ENCODE measurements at regions of chr11 and their contacts with region 1.

Region 1: DNA sequence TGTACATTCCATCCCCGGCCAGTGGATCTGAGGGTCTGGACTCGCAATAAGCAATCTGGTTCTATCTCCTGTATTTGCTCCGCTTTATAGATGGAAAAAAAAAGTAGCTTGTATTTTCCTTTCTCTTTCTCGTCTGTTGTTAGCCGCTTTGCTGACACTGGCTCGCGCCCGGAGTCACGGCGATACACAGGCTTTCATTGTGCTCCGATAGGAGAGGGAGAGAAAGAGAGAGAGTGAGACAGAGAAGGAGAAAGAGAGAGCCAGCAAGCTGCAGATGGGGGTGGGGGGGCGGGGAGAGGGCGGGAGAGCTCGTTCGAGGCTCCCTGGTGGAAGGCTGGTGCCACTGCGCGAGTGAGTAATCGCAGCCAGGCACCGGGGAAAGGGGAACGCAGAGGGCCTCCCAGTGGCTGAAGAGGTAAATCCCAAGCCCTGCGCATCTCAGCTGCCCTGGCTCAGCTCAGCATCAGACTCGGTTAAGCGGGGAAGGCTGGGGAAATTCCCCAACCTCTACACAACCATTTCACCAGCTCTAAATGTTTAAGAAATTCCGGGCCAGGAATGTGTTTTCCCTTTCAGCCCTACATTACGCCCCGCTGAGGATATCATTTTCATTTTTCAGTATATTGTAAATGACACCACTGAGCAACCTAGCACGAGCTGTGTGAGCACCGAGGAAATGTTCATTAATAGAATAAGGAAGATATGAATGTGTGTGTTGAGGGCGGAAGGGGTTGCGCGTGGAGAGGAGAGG is at the start of gene MAML2:
- DNase-seq: peak; percentile 76
- H3K4me3 ChIP-seq: peak within 1 kb of the TSS; percentile 81
- CTCF ChIP-seq: peak; percentile 94

Region 2: DNA sequence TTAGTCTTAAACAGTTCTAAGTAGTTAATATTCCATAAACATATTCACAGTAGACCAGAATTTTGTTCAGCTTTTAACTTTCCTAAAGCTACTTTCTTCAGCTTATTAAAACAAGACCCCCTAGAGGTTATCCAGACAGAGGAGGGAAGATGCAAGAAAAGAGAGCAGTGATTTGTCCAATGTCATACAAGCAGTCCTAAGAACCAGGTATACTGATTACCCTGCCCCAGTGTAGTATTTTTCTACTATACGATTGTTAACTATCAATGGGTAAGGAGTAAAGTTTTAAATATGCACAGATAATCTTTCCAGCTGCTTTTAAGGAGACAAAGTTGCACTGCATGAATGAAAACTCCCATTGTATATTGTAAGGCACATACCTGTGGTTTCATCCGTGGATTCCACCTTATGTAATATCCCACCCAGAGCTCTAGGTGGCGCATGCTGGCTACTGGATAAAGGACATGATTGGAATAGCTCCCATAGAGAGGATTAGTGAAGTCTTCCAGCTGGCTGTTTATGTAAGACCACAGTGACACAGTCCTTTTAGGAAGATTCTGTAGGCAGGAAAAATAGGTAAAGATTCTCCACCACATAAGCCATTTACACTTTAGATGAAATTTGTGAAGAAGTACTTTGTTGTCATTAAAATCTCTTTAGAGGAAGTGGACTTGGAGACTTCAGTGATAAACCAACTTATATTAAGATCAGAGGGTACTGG is 507.2 kb before region 1 on chr11:
- CTCF ChIA-PET with region 1: interaction called, 47 read pairs
- POLR2A ChIA-PET with region 1: interaction called, 3 read pairs
- DNase-seq: peak; percentile 82
- H3K4me3 ChIP-seq: no peak overlapping the region
- CTCF ChIP-seq: peak; percentile 79

Region 3: DNA sequence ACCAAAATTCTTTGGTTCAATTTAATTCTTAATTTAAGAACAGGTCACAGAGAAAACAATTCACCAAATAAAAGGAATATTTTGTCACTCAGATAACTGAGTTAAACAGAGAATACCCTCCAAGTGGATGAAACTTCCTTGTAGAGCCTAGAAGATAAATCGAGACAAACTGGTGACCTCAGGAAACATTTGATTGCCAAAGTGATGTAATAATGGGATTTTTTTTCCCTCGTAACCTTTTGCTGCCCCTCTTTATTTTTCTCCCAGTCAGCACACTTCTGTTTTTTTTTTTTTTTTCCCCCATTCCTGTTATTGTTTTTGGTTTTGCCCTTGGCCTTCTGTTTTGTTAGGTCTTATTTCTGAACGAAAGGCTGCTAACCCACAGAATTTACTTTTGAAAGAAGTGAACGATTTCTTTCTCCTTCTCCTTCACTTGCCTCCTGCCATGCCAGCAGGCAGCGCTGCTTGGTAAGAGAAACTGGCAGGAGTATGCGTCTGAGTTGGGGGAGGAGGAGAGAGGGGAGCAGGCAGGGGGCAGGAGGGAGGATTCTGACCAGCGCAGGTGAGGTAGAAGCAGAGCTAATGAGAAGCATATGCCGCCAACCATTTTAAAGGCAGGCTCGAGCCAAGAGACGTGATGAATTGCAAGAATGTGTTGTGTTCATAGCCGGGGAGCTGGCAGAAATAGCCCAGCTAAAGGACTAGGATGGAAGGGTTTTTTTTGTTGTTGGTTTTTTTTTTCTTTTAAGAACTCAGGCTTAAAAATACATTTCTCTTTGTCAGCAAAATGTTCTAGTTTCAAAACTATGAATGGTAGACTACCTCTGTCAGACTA is 297.3 kb before region 1 on chr11:
- CTCF ChIA-PET with region 1: interaction called, 12 read pairs
- POLR2A ChIA-PET with region 1: no interaction called
- DNase-seq: peak; percentile 65
- H3K4me3 ChIP-seq: peak overlapping the region; percentile 16; the same call in 1 of the 2 replicates
- CTCF ChIP-seq: peak; percentile 50

Region 4: GRCh38 chr11:96143016-96143670 is 200.0 kb before region 1 on chr11:
- CTCF ChIA-PET with region 1: interaction called, 12 read pairs
- POLR2A ChIA-PET with region 1: no interaction called
- DNase-seq: no peak
- H3K4me3 ChIP-seq: no peak overlapping the region
- CTCF ChIP-seq: no peak

Region 5: DNA sequence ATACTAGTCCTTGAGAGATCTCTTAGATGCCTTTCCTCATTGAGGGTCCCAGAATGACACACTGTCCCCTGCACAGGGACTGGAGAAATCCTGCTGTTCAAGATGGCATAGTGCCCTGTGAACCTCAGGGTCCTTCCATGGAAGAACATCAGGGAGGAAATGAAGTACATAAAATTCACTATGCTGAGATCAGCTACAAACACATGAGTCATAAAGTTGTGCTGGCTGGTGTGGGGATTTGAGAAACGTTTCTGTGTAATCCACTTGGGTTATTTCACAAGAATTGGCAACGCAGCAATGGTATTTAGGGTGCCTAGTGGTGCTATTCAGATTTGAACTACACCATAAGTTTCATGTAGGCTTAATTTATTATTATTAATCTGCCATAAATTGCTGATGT is 174.5 kb before region 1 on chr11:
- CTCF ChIA-PET with region 1: interaction called, 17 read pairs
- POLR2A ChIA-PET with region 1: interaction called, 10 read pairs
- DNase-seq: no peak
- H3K4me3 ChIP-seq: no peak overlapping the region
- CTCF ChIP-seq: no peak

Region 6: GRCh38 chr11:96235751-96236150 is 107.4 kb before region 1 on chr11:
- CTCF ChIA-PET with region 1: interaction called, 24 read pairs
- POLR2A ChIA-PET with region 1: no interaction called
- DNase-seq: no peak
- H3K4me3 ChIP-seq: no peak overlapping the region
- CTCF ChIP-seq: no peak

Region 7: DNA sequence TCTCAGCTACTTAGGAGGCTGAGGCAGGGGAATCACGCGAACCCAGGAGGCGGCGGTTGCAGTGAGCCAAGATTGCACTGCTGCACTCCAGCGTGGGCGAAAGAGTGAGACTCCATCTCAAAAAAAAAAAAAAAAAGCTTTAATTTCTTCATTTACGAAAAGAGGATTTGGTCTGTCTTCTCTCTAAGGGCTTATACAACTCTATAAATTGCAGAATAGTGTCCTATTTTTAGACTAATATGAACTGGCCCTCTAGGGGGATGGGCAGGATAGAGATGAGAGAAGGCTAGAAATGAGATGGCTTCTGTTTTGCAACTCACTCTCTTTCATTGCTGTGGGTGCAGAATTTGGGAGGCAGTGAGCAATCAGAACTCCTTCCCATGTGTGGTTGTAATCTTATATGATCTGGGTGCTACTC is 11.4 kb before region 1 on chr11:
- CTCF ChIA-PET with region 1: interaction called, 13 read pairs
- POLR2A ChIA-PET with region 1: no interaction called
- DNase-seq: no peak
- H3K4me3 ChIP-seq: no peak overlapping the region
- CTCF ChIP-seq: no peak

Region 8: GRCh38 chr11:96486894-96487595 is 143.9 kb after region 1 on chr11:
- CTCF ChIA-PET with region 1: no interaction called
- POLR2A ChIA-PET with region 1: no interaction called
- DNase-seq: no peak
- H3K4me3 ChIP-seq: no peak overlapping the region
- CTCF ChIP-seq: no peak

Region 9: DNA sequence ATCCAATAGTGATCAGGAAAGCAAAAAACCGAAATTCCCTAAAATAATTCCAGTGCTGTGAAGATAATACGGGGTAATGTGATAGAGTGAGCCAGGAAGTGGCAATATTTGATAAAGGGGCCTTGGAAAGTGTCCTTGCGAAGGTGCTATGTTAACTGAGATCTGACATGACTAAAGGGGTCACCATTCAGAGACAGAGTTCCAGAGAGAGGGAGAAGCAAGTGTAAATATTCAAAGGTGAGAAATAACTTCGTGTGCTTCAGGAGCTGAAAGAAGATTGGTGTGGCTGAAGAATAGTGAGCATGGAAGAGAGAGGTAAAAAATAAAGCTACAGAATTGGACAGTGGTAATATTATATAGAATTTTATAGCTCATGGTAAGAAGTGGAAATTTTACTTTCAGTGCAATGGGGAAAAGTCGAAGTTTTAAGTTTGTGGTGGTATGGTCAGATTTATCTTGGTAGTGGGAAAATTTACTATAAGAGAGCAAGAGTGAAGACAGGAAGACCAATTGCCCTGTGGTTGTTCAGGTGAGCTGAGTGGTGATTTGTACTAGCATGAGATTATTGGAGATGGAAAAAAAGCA is 211.2 kb after region 1 on chr11:
- CTCF ChIA-PET with region 1: no interaction called
- POLR2A ChIA-PET with region 1: no interaction called
- DNase-seq: no peak
- H3K4me3 ChIP-seq: no peak overlapping the region
- CTCF ChIP-seq: no peak